ENCODE measurements at regions of chr9 and their contacts with region 1.

Region 1: DNA sequence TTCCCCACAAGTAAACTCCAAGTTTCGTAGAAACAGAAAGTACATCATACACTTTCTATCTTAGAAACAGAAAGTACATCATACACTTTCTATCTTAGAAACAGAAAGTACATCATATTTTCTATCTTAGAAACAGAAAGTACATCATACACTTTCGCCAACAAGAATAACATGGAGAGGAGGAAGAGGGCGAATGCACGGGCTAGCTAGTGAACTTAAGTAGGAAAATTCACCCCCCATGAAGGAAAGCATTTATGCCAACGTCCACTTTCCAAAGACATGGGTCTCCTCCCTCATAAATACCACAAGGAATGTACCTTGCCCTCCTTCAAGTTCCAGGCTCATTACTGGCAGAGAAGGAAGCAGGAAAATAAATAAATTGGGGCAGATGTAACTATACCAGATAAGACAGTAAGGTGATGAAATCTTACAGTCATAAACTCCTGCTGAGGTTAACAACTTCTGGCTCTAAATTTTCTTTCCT is 64.7 kb downstream of the FRMD3 start:
- DNase-seq: no peak
- ATAC-seq: peak; percentile 16

Region 2: GRCh38 chr9:83403527-83404238 is 69.8 kb before region 1 on chr9:
- intact Hi-C with region 1: loop called (anchors 10 kb)
- DNase-seq: no peak
- ATAC-seq: no peak

Region 3: DNA sequence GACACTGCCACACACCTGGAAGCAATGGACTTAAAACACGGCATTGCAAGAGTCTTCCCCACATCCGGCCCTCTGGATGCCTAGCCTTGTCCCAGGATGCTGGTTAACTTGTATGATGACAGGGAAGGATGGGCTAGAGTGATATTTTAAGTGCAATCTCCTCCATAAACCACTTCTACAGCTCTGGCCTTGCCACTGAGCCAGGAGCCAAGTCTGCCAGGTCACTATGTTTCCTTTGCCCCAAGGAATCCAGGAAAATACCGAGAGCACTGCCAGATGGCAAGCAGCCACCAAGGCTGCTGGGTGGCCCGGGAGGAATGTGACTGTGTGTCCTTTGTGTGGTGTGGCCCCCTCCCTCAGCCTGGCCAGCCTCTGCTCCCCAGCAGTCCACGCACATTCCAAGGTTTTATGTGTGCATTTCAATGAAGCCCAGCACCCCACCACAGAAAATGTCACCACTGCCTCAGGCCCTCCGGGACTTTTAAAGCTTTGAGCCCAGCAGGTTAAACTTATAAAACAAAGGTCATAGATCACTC is 41.4 kb before region 1 on chr9:
- intact Hi-C with region 1: loop called (anchors 5 kb)
- DNase-seq: peak; percentile 85
- ATAC-seq: peak; percentile 81

Region 4: DNA sequence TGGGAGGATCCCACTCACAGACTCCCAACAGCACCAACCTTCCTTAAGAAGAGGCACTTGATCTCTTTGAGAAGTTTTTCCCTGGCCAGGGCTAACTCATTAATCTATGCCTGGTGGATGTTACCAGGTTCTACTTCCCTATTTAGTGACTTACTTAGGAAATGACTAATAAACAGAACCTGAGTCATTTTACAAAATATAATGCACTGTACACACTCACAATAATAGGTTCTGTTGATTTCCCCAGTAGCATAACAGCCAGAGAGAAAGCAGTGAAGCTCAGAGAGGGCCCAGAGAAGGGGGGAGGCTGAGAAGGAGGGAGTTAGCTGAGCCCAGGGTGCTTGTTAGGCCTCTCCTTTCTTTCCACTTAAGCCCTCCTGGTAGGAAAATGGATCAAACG is 37.5 kb after region 1 on chr9:
- intact Hi-C with region 1: no loop called
- DNase-seq: no peak
- ATAC-seq: peak; percentile 28